ENCODE measurements at regions of chr1 and their contacts with region 1.

Region 1: GRCh38 chr1:26787706-26788514 is at the start of gene PIGV:
- DNase-seq: peak; percentile 78
- H3K4me3 ChIP-seq: peak within 1 kb of the TSS; percentile 61 to 80 (median 74)
- H3K27ac ChIP-seq: peak within 1 kb of the TSS; percentile 93
- H3K4me1 ChIP-seq: peaks cover 26% of the 10 kb centered on the region
- H3K27me3 ChIP-seq: no peaks in the 10 kb centered on the region
- CTCF ChIP-seq: peak in 1 of 2 donors; percentile 12
- total RNA-seq, gene PIGV: 18.0 to 19.2 TPM

Region 2: DNA sequence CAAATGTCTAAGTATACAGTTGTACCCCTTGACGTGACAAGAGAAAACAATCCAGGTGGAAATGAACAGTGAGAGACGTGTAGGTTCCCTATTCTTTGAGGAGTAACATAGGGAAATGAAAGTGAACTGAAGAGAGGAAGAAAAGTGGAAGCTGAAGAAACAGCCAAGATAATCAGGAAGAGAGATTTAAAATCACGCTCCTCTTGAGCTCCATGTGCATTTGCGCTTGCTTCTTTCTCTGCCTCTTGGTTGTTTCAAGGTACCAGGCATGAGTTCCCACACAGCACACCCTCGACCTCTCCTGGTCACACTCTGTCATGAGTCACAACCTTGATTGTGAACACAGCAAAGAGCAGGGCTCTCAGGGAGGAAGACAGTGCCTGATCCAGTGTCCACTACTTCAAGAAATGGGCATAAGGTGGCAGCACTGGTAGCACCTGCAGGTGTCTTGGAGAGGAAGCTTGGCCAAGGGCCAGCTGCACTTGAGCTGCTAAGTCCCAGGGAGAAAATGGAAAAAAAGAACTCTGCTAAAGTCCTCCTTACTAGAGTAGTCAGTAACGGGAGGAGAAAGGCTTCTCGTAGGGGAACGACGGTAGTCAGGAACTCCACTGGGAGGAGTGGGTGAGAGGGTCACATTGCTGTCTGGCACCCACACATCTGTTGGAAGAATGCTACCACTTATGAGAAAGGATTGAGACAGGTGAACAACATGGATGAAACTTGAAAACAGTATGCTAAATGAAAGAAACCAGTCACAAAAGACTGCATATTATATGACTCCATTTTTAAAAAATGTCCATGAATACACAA is 110.4 kb before region 1 on chr1:
- CTCF ChIA-PET with region 1: interaction called, 28 read pairs
- dilution Hi-C with region 1: no loop called
- in situ Hi-C with region 1: no loop called
- intact Hi-C with region 1: loop called (anchors 1 kb)
- DNase-seq: peak; percentile 91
- H3K4me3 ChIP-seq: no peak overlapping the region
- H3K27ac ChIP-seq: no peak overlapping the region
- H3K4me1 ChIP-seq: peaks cover 4% of the 10 kb centered on the region
- H3K27me3 ChIP-seq: no peaks in the 10 kb centered on the region
- CTCF ChIP-seq: peak; percentile 77 to 90

Region 3: GRCh38 chr1:26733982-26734381 is 53.9 kb before region 1 on chr1:
- CTCF ChIA-PET with region 1: no interaction called
- dilution Hi-C with region 1: no loop called
- in situ Hi-C with region 1: no loop called
- intact Hi-C with region 1: loop called (anchors 2 kb)
- DNase-seq: peak; percentile 90
- H3K4me3 ChIP-seq: no peak overlapping the region
- H3K27ac ChIP-seq: peak overlapping the region; percentile 73
- H3K4me1 ChIP-seq: peaks cover 27% of the 10 kb centered on the region
- H3K27me3 ChIP-seq: no peaks in the 10 kb centered on the region
- CTCF ChIP-seq: no peak

Region 4: DNA sequence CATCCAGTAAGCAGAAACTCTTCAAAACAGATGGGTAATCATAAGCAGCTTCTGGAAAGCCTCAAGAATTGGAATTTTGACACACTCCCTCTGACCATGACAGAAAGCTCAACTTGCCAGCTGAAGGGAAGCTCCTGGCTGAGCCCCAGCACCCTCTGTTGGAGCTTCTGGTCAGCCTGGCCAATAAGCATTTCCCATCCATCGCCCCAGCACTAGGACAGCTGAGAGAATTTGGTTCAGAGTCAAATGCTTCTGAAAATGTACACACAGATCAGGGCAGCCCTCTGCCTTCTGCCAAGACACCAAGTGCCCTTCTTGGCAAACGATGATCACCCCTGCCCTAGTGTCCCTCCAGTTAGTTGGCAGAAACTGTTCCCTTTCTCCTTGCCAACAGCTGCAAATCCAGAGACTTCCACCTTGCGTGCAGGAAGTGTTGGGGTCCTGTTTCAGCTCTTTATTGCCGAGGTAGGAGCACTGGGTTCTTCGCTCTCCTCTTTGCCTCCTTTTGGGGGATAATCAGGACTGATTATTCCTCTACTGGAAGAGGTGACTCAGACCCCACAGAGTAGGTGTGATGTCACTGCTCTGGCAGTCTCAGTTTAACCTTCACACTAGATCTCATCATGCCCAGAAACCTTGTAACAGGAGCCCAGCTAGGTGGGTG is 11.7 kb after region 1 on chr1:
- CTCF ChIA-PET with region 1: no interaction called
- dilution Hi-C with region 1: no loop called
- in situ Hi-C with region 1: no loop called
- intact Hi-C with region 1: no loop called
- DNase-seq: peak; percentile 83
- H3K4me3 ChIP-seq: no peak overlapping the region
- H3K27ac ChIP-seq: no peak overlapping the region
- H3K4me1 ChIP-seq: peaks cover 12% of the 10 kb centered on the region
- H3K27me3 ChIP-seq: no peaks in the 10 kb centered on the region
- CTCF ChIP-seq: no peak

Region 5: GRCh38 chr1:26811057-26811456 is 23.1 kb after region 1 on chr1:
- CTCF ChIA-PET with region 1: no interaction called
- dilution Hi-C with region 1: no loop called
- in situ Hi-C with region 1: no loop called
- intact Hi-C with region 1: no loop called
- DNase-seq: no peak
- H3K4me3 ChIP-seq: no peak overlapping the region
- H3K27ac ChIP-seq: no peak overlapping the region
- H3K4me1 ChIP-seq: no peaks in the 10 kb centered on the region
- H3K27me3 ChIP-seq: no peaks in the 10 kb centered on the region
- CTCF ChIP-seq: no peak

Region 6: GRCh38 chr1:26833432-26834405 is 45.8 kb after region 1 on chr1:
- CTCF ChIA-PET with region 1: no interaction called
- dilution Hi-C with region 1: loop called (anchors 5 kb)
- in situ Hi-C with region 1: no loop called
- intact Hi-C with region 1: no loop called
- DNase-seq: no peak
- H3K4me3 ChIP-seq: no peak overlapping the region
- H3K27ac ChIP-seq: no peak overlapping the region
- H3K4me1 ChIP-seq: no peaks in the 10 kb centered on the region
- H3K27me3 ChIP-seq: no peaks in the 10 kb centered on the region
- CTCF ChIP-seq: no peak